ENCODE measurements at regions of chr1 and their contacts with region 1.

Region 1: DNA sequence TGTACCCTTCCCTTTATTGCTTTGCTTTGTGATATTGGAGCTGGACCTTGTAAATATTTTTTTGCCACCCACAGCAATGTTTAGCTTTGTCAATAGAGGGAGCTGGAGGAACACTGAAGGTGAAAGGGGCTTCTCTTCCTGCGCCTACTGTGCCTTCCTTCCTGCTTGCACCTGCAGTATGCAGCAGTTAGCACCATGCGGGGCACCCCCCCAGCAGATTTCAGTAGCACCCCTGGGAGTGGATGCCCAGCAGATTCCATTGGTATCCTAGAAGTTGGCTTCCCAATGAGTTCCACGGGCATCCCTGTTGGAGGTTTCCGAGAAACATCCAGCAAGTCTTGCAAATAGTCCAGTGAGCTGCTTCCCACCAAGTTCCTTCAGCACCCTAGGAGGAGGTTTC is 25.6 kb downstream of the S100A10 start:
- DNase-seq: peak; percentile 66
- ATAC-seq: peak; percentile 93
- H3K4me3 ChIP-seq: no peak overlapping the region
- H3K27ac ChIP-seq: no peak overlapping the region
- H3K4me1 ChIP-seq: peaks cover 20% of the 10 kb centered on the region
- H3K27me3 ChIP-seq: no peaks in the 10 kb centered on the region; a peak in 1 of 5 replicates
- CTCF ChIP-seq: peak; percentile 94
- EP300 ChIP-seq: no peak
- POLR2A ChIP-seq: no peak
- RAD21 ChIP-seq: peak; percentile 90

Region 2: GRCh38 chr1:151993654-151994496 is 25.8 kb after region 1 on chr1 and contains the start of gene S100A10:
- CTCF ChIA-PET with region 1: interaction called, 59 read pairs
- POLR2A ChIA-PET with region 1: interaction called, 4 read pairs
- in situ Hi-C with region 1: loop called (anchors 5 kb)
- intact Hi-C with region 1: loop called (anchors 1 kb)
- DNase-seq: peak; percentile 46
- ATAC-seq: peak; percentile 82
- H3K4me3 ChIP-seq: peak within 1 kb of the TSS; percentile 69 to 89 (median 81)
- H3K27ac ChIP-seq: peak within 1 kb of the TSS; percentile 50
- H3K4me1 ChIP-seq: peaks cover 56% of the 10 kb centered on the region
- H3K27me3 ChIP-seq: no peaks in the 10 kb centered on the region; a peak in 1 of 5 replicates
- CTCF ChIP-seq: no peak
- EP300 ChIP-seq: no peak
- POLR2A ChIP-seq: peak in 1 of 2 experiments; percentile 78; a peak in 2 of 4 replicates
- RAD21 ChIP-seq: no peak
- total RNA-seq, gene S100A10: 16.8 and 25.6 TPM in 2 replicates

Region 3: GRCh38 chr1:152001391-152002249 is 33.6 kb after region 1 on chr1:
- CTCF ChIA-PET with region 1: interaction called, 59 read pairs
- POLR2A ChIA-PET with region 1: interaction called, 12 read pairs
- in situ Hi-C with region 1: loop called (anchors 5 kb)
- intact Hi-C with region 1: loop called (anchors 1 kb)
- DNase-seq: peak; percentile 72
- ATAC-seq: peak; percentile 74
- H3K4me3 ChIP-seq: no peak overlapping the region
- H3K27ac ChIP-seq: no peak overlapping the region
- H3K4me1 ChIP-seq: peaks cover 11% of the 10 kb centered on the region
- H3K27me3 ChIP-seq: peaks cover 0 to 5% of the 10 kb centered on the region in 2 experiments; a peak in 2 of 5 replicates
- CTCF ChIP-seq: peak; percentile 81
- EP300 ChIP-seq: no peak
- POLR2A ChIP-seq: no peak
- RAD21 ChIP-seq: peak; percentile 84

Region 4: GRCh38 chr1:152013664-152014237 is 45.7 kb after region 1 on chr1:
- CTCF ChIA-PET with region 1: interaction called, 9 read pairs
- POLR2A ChIA-PET with region 1: no interaction called
- in situ Hi-C with region 1: no loop called
- intact Hi-C with region 1: loop called (anchors 1 kb)
- DNase-seq: no peak
- ATAC-seq: peak; percentile 53; the same call in 1 of the 3 replicates
- H3K4me3 ChIP-seq: no peak overlapping the region
- H3K27ac ChIP-seq: no peak overlapping the region
- H3K4me1 ChIP-seq: 0 out of 2 replicates have a peak, but pooled peaks cover 5% of the 10 kb centered on the region
- H3K27me3 ChIP-seq: peaks cover 0 to 3% of the 10 kb centered on the region in 2 experiments; a peak in 1 of 5 replicates
- CTCF ChIP-seq: peak; percentile 72
- EP300 ChIP-seq: no peak
- POLR2A ChIP-seq: no peak
- RAD21 ChIP-seq: no peak

Region 5: DNA sequence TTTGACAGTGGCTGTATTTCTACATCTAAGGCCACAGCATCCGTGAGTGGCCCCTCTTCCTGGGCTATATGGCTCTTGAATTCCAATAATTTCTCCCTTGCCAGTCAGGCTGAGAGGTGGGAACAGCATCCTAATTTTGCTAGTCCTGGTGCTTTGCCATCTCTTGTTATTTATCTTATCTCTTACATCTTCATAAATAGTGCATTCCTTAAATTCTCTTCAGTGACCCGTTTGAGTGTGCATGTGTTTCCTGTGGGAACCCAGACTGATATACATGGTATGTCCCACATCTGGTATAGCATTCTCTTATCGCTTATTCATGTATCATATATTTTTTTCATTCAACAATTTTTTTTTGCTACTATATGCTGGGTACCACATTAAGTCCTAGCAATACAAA is 58.8 kb after region 1 on chr1:
- CTCF ChIA-PET with region 1: no interaction called
- POLR2A ChIA-PET with region 1: no interaction called
- in situ Hi-C with region 1: no loop called
- intact Hi-C with region 1: no loop called
- DNase-seq: no peak
- ATAC-seq: no peak
- H3K4me3 ChIP-seq: no peak overlapping the region
- H3K27ac ChIP-seq: no peak overlapping the region
- H3K4me1 ChIP-seq: no peaks in the 10 kb centered on the region
- H3K27me3 ChIP-seq: peaks cover 0 to 16% of the 10 kb centered on the region in 2 experiments; a peak in 3 of 5 replicates
- CTCF ChIP-seq: no peak
- EP300 ChIP-seq: no peak
- POLR2A ChIP-seq: no peak
- RAD21 ChIP-seq: no peak

Measured in HepG2 (cell line).